Caco-2 (cell line): ENCODE measurements at regions of chr3 and their contacts with region 1.

Region 1: GRCh38 chr3:48446425-48447193 is at the start of gene ATRIP:
- DNase-seq: peak; percentile 91 to 96
- H3K4me3 ChIP-seq: peak within 1 kb of the TSS; percentile 87
- H3K4me3 Mint-ChIP-seq: peak within 1 kb of the TSS; percentile 95
- H3K27ac Mint-ChIP-seq: peak within 1 kb of the TSS; percentile 89
- H3K4me1 ChIP-seq: peaks cover 11% of the 10 kb centered on the region; the same call in 1 of the 2 replicates
- H3K4me1 Mint-ChIP-seq: peaks cover 26% of the 10 kb centered on the region
- H3K27me3 ChIP-seq: no peaks in the 10 kb centered on the region
- H3K27me3 Mint-ChIP-seq: no peaks in the 10 kb centered on the region
- CTCF ChIP-seq: no peak
- total RNA-seq, gene ATRIP: 14.4 and 15.9 TPM in 2 replicates

Region 2: DNA sequence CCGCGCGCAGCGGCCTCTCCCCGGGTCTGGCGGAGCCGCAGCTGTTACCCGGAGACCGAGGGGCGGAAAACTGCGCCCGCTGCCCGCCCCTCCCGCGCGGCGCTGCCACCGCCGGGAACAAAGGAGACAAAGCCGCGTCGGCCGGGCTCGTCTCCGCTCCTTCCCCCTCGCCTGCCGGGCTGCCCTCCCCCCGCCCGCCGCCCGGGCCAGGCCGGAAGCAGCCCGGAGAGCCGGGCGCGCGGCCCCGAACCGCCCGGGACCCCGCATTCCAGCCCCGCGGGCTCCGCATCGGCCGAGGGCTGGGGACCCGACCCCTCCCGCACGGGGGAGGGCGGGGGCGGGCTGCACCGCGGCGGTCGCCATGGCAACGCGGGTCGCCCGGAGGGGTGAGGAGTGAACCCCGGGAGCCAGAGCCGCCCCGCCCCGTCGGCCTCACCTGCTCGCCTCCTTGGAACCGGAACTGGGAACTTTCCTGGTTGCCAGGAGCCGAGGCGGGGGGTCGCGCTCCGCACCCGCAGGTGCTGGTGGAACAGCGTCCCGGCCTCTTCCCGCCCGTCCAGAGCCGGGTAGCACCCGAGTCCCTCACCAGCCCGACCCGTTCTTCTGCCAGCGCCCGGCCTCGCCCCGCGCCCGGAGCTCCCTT is 17.2 kb before region 1 on chr3:
- CTCF ChIA-PET with region 1: interaction called, 12 read pairs
- POLR2A ChIA-PET with region 1: interaction called, 20 read pairs
- intact Hi-C with region 1: no loop called
- DNase-seq: peak; percentile 87
- H3K4me3 ChIP-seq: peak overlapping the region; percentile 84
- H3K4me3 Mint-ChIP-seq: peak overlapping the region; percentile 98
- H3K27ac Mint-ChIP-seq: no peak overlapping the region
- H3K4me1 ChIP-seq: peaks cover 65% of the 10 kb centered on the region
- H3K4me1 Mint-ChIP-seq: peaks cover 52% of the 10 kb centered on the region
- H3K27me3 ChIP-seq: no peaks in the 10 kb centered on the region
- H3K27me3 Mint-ChIP-seq: no peaks in the 10 kb centered on the region
- CTCF ChIP-seq: no peak

Region 3: GRCh38 chr3:48465531-48466378 is 19.1 kb after region 1 on chr3:
- CTCF ChIA-PET with region 1: no interaction called
- POLR2A ChIA-PET with region 1: interaction called, 10 read pairs
- intact Hi-C with region 1: no loop called
- DNase-seq: peak; percentile 97
- H3K4me3 ChIP-seq: no peak overlapping the region
- H3K4me3 Mint-ChIP-seq: peak overlapping the region; percentile 56
- H3K27ac Mint-ChIP-seq: peak overlapping the region; percentile 99
- H3K4me1 ChIP-seq: peaks cover 19% of the 10 kb centered on the region
- H3K4me1 Mint-ChIP-seq: peaks cover 16% of the 10 kb centered on the region
- H3K27me3 ChIP-seq: no peaks in the 10 kb centered on the region
- H3K27me3 Mint-ChIP-seq: no peaks in the 10 kb centered on the region
- CTCF ChIP-seq: peak; percentile 61 to 83

Region 4: DNA sequence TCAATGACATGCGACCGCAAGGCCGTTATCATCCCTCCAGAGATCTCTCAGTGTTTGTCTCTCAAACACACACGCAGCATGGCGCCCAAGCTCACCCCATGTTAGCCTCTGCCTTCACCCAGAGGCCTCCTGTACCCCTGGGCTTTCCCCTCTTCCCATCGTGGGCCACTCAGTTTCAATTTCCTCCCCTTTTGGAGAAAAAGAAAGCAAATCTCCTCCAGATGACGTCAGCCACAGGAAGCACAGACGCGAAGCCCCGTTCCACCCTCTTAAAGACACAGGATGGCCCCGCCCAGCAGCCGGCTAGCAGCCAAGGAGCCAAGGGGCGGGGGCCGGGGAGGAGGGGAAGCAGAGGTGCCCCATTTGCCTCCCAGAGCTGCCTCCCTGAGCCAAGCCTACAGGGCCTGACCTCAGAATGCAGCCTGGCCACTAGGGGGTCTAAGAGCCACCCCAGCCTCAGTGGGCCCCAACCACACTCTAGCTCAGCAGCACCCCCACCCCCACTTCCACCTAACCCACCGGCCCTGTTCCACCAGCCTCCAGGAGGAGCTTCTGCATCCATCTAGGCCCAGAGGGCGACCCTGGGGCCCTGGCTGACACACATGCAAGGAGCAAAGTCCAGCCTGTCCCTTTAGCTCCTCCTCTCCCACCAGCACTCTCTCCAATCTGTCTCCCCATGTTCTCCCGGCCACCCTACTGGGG is 26.5 kb after region 1 on chr3:
- CTCF ChIA-PET with region 1: interaction called, 11 read pairs
- POLR2A ChIA-PET with region 1: interaction called, 21 read pairs
- intact Hi-C with region 1: no loop called
- DNase-seq: peak; percentile 98 to 99
- H3K4me3 ChIP-seq: peak overlapping the region; percentile 39
- H3K4me3 Mint-ChIP-seq: peak overlapping the region; percentile 88
- H3K27ac Mint-ChIP-seq: peak overlapping the region; percentile 97
- H3K4me1 ChIP-seq: peaks cover 22% of the 10 kb centered on the region; the same call in 1 of the 2 replicates
- H3K4me1 Mint-ChIP-seq: peaks cover 20% of the 10 kb centered on the region
- H3K27me3 ChIP-seq: no peaks in the 10 kb centered on the region
- H3K27me3 Mint-ChIP-seq: no peaks in the 10 kb centered on the region
- CTCF ChIP-seq: peak; percentile 78

Region 5: DNA sequence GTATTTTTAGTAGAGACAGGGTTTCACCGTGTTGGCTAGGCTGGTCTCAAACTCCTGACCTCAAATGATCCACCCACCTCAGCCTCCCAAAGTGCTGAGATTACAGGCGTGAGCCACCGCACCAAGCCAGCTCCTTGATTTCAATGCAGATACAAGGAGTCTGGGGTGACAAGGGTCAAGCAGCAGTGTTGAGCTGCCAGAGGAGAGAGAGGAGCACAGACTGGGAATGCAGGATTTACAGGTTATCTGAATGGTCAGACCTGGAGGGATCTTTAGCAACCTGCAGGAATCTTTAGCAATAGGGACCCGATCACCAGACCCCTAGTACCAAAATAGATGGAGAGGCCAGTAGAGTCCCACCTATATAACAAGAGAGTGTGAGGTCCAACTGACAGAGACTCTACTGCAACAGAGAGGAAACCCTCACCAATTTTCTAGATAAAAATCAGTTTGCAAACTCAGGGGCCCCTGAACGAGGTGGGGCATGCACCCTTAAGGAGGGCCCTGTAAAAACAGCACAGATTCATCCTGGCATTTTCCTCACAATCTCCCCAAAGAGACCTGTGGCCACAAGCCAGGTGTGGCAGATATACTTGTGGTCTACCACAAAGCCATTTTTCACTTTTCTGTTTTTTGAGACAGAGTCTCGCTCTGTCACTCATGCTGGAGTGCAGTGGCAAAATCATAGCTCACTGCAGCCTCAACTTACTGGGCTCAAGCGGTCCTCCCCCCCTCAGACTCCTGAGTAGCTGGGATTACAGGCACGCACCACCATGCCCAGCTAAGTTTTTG is 68.0 kb after region 1 on chr3:
- CTCF ChIA-PET with region 1: no interaction called
- POLR2A ChIA-PET with region 1: no interaction called
- intact Hi-C with region 1: no loop called
- DNase-seq: peak in 1 of 2 experiments; percentile 44
- H3K4me3 ChIP-seq: no peak overlapping the region
- H3K4me3 Mint-ChIP-seq: no peak overlapping the region
- H3K27ac Mint-ChIP-seq: no peak overlapping the region
- H3K4me1 ChIP-seq: peaks cover 6% of the 10 kb centered on the region; the same call in 1 of the 2 replicates
- H3K4me1 Mint-ChIP-seq: no peaks in the 10 kb centered on the region
- H3K27me3 ChIP-seq: no peaks in the 10 kb centered on the region
- H3K27me3 Mint-ChIP-seq: no peaks in the 10 kb centered on the region
- CTCF ChIP-seq: no peak